Left colon (tissue), 2 donors: ENCODE measurements at regions of chr1 and their contacts with region 1.

Region 1: GRCh38 chr1:84433258-84434080 is 35.2 kb downstream of the DNASE2B start:
- DNase-seq: peak; percentile 61 to 73
- ATAC-seq: peak; percentile 87

Region 2: DNA sequence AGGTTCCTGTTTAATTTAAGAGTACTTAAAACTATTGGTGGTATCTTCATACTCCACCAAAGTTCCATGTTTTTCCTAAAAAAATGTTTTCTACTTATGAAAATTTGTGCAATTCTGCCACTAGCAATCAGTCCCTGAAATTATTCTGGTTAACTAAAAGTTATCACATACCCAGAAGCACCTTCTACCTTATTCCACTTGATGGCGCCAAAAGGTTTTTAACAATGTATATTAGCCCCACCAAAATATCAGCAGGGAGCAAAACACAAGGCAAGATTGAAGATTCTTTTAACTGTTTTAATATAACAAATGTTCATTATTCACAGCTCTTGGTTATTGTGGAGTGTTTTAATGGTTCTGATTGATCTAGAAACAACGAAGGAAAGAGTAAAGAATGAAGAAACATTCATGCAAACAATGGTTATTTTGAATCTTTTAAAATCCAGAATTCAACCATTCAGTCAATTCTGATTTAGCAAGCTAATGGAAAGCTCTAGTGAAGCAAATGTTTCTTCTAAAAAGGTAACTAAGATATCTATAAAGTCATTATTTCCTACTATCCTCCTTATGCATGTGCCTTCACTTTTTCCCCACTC is 501.7 kb before region 1 on chr1:
- intact Hi-C with region 1: loop called in 1 of 2 experiments (anchors 5 kb)
- DNase-seq: no peak
- ATAC-seq: peak; percentile 66

Region 3: DNA sequence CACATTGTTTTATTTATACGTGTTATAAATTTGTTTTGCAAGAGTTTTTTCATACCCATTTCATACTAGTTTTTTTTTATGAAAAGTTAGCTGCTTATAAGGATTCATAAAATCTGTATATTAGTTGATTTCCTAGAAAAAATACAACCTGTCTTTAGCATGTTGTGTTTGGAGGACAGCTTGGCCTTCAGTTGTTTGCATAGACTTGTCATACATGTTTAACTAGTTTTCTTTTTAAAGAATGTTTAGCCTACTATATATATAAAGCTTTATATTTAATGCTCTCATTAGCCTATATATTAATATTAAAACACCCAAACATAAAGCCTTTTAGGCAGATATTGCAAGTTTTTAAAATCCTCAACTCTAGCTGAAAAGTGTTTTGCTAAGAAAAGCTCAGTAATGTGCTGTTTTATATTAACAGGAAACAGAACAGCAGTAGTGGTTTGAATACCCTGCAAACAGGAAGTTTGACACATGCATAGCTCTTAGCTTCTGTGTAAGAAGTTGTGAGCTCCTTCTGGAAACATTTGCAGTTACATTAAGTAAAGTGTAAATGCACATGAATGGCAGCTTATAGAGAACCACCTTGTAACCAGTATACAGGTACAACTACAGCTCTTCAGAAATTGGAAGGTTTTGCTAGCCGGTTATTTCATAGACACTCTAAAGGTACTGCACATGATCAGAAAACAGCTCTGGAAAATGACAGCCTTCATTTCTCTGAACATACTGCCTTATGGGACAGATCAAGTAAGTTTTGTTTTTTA is 289.5 kb before region 1 on chr1 and contains the start of gene PRKACB:
- intact Hi-C with region 1: loop called in 1 of 2 experiments (anchors 5 kb)
- DNase-seq: no peak
- ATAC-seq: peak; percentile 77
- total RNA-seq, gene PRKACB: 113 to 127 TPM

Region 4: DNA sequence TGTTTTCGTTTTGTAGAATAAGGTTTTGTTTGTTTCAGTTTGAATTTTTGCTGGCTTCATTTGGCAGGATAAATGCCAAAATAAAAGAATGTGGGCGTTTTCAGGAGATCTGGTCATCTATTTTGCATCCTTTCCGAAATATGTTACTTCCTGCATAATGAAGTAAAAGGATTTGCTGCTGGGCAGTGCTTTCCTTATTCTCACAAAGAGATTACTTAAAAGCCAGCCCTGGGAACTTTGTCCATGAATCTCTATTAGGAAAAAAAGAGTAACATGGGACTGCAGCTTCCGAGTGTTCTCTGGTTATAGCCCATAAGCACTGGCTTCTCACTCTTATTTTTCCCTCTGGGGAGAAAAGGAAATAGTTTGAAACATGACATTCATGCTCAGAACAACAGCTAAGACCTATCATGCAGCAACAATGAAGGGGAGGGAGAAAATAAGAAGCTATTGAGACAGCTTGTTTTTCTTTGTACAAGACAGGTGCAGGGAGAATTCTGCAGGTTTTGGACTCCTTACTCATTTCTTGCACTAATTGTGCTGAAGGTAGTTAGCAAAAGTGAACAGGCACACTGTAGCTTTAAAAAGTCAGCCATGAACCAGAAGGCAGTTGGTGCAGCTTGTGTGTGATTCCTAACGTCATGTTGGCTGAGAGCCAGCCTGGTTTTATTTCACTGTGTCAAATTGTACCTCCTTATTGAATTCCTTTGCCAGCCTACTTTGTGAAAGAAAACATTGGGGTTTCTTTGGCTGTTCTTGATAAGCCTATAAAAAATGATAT is 132.3 kb before region 1 on chr1 and contains the start of gene SAMD13:
- intact Hi-C with region 1: loop called in 1 of 2 experiments (anchors 10 kb)
- DNase-seq: peak; percentile 87 to 93
- ATAC-seq: peak; percentile 50
- total RNA-seq, gene SAMD13: 24.5 to 29.9 TPM

Region 5: DNA sequence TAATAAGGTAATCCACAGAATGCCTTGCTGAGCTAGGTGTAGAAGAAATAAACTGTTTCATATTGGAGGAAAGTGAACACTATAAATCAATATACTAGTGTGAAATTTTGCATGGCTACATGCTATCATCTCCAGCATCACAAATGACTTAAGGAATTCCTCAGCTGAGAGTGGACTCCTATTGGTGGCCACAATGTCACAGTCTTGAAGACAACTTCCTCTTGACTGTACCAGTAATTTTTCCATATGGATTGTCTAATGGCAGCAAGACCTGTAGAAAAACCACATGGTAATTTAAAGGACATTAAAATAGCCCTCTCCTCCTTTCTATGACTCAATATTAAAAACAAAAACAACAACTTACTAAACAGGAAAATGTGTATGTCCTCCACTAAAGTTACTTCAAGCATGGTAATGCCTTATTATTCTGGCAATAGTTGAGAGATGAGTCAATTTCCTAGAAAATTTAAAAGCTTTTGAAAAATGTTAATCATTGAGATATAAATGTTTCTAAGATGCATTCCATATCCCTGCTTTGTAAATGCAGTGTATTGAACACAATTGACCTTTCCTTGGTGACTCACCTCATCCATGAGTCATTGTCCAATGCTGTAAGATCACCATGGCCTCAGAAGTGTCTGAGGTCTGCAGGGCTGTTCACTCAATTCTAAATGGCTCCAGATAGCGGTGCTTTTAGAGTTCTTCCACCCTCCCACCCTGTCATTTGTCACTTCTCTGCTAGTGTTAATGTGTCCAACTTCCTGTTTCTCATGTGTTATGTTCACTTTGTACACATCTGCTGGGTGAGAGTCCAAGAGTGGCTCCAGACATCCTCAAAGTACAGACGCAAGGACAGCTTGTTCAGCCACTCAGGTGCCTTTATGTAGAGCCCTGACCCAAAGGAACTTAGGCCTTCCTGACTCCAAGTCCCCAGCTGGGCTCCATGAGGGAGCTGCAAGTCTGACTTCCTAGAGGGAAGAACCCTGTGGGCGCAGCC is 67.9 kb before region 1 on chr1:
- intact Hi-C with region 1: no loop called
- DNase-seq: peak in 1 of 2 donors; percentile 26
- ATAC-seq: peak; percentile 87

Region 6: DNA sequence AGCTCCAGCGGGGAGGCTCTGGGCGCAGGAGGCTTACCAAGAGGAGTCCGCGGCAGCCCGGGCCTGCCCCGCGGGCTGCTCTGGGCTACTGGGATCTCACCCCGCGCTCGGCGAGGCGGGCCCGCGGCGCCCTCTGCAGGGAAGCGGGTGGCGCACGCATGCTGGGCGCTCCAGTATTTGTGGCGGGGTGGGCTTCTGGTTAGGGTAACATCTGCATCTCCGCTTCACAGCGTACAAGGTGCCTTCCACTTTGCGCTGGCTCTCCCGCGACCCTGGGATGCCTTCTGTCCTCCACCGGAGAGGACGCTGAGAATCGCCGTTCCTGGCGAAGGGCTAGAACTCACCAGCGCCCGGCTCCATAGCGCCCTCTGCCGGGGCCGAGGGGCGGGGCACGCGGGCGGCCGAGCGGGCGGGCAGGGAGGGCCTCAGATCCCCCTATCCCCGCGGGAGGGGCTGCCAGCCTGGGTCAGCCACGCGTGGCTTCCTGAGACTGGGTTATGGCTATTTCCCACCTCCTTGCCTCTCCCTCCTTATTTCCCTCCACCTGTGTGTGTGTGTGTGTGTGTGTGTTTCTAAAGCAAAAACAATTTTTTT is 187.3 kb after region 1 on chr1:
- intact Hi-C with region 1: loop called in 1 of 2 experiments (anchors 10 kb)
- DNase-seq: peak; percentile 71 to 81
- ATAC-seq: peak; percentile 98

Region 7: GRCh38 chr1:84772428-84772943 is 339.0 kb after region 1 on chr1:
- intact Hi-C with region 1: loop called in 1 of 2 experiments (anchors 5 kb)
- DNase-seq: peak; percentile 67 to 82
- ATAC-seq: peak; percentile 90